GM10248 (cell line): ENCODE measurements at regions of chr16 and their contacts with region 1.

Region 1: DNA sequence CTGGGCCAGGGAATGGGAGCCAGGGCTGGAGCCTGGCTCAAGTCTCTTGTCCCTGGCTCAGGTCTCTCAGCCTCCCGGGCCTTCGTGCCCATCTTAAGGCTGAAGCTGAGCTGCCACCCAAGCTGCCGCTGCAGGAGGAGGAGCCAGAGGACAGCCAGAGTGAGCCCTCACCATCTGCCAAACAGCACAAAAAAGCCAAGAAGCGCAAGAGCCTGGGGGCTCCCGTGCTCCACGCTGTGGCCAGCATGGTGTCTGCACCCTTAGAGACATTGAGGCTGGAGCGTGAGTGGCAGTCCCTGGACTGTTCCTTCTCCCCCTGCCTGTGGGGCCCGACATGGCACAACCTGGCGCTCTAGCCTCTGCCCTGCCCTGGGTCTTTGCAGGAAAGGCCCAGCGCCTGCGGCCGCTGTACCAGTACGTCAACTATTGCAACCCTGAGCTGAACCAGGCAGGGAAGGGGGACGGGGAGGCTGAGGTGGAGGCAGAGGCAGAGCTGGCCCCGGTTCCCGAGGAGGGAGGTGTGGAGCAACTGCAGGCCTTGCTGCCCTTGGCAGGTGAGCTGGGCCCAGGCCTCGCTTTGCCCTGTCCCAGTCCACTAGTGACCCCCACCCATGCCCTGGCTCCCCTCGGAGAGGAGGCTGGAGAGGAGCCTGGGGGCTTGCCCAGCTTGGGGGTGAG is 1.3 kb downstream of the C16orf86 start:
- DNase-seq: peak; percentile 92
- CTCF ChIP-seq: peak; percentile 86

Region 2: DNA sequence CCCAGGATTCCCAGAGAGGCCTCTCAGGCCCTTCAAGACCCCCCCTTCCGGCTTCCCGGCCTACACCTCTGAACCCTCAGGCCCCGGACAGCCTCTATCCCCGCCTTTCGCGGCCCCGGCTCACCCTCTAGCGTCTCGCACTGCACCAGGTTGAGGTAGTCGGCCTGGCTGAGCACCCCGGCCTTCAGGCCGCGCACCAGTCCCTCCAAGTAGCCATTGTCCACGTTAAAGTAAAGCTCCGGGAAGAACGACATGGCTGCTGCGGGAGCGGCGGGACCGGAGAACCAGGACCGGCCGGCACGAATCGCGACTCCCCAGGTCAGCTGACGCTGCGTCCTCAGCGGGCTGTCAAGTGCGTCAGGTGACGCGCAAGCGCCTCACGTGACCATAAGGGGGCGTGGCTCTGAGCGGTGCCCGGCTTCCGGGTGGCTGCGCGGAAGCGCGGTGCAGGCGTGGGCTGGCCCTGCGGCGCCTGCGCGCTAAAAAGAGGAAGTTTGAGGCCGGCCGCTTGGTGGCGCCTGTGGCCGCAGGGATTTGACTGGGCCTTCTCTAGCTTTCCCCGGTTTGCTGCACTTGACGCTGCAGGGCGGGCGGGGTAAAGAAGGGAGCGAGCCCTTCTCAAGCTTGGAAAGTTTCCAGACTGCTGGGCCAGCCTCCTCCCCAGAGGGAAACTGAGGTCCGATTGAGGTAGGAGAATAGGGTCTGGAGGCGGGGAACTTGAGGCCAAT is 187.0 kb before region 1 on chr16 and contains the start of gene ATP6V0D1:
- CTCF ChIA-PET with region 1: interaction called, 12 read pairs
- POLR2A ChIA-PET with region 1: no interaction called
- DNase-seq: peak; percentile 99
- CTCF ChIP-seq: peak; percentile 90

Region 3: DNA sequence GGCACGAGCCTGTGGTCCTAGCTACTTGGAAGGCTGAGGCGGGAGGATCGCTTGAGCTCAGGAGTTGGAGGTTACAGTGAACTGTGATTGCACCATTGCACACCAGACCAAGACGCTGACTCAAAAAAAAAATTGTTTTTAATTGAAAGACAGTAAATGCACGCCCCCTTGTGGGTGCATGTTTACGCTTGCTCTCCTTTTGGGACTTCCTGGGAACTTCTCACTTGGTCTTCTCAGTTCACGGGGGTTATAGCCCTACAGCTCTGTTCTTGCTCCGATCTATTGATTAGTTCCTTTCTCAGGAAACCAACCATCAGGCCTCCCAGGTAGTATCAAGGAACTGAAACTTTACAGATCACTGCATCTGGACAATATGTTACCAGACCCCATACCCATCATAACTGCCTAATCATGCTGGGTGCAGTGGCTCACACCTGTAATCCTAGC is 153.6 kb before region 1 on chr16:
- CTCF ChIA-PET with region 1: interaction called, 357 read pairs
- POLR2A ChIA-PET with region 1: no interaction called
- DNase-seq: peak; percentile 79
- CTCF ChIP-seq: peak; percentile 61

Region 4: DNA sequence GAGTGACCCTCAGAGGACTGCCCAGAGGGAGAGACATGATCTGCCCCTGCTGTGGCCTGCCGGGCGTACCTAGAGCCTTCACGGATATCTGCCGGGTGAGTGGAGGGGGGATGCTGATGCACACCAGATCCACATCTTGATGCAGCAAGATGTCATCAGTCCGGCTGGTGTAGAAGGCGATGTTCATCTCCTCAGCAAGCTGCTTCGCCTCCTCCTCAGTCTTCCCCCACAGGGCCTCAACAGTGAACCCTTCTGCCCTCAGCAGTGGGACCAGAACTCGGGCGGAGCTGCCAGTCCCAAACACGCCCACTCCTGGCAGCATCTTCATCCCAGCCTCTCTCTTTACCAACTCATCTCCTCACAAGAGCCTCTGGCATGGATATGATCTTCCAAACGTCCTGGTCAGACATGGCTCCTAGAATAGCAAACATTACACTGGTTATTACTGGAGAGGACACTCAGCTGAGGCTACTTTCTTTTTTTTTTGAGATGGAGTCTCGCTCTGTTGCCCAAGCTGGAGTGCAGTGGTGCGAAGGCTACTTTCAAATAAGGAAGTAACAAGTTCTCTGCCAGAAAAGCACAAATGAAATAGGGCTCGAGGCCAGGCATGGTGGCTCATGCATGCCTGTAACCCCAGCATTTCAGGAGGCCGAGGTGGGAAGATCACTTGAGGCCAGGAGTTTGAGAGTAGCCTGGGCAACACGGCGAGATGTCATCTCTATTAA is 17.6 kb after region 1 on chr16:
- CTCF ChIA-PET with region 1: interaction called, 72 read pairs
- POLR2A ChIA-PET with region 1: interaction called, 3 read pairs
- DNase-seq: peak; percentile 37
- CTCF ChIP-seq: no peak

Region 5: GRCh38 chr16:67828651-67829050 is 160.7 kb after region 1 on chr16:
- CTCF ChIA-PET with region 1: no interaction called
- POLR2A ChIA-PET with region 1: no interaction called
- DNase-seq: no peak
- CTCF ChIP-seq: no peak

Region 6: DNA sequence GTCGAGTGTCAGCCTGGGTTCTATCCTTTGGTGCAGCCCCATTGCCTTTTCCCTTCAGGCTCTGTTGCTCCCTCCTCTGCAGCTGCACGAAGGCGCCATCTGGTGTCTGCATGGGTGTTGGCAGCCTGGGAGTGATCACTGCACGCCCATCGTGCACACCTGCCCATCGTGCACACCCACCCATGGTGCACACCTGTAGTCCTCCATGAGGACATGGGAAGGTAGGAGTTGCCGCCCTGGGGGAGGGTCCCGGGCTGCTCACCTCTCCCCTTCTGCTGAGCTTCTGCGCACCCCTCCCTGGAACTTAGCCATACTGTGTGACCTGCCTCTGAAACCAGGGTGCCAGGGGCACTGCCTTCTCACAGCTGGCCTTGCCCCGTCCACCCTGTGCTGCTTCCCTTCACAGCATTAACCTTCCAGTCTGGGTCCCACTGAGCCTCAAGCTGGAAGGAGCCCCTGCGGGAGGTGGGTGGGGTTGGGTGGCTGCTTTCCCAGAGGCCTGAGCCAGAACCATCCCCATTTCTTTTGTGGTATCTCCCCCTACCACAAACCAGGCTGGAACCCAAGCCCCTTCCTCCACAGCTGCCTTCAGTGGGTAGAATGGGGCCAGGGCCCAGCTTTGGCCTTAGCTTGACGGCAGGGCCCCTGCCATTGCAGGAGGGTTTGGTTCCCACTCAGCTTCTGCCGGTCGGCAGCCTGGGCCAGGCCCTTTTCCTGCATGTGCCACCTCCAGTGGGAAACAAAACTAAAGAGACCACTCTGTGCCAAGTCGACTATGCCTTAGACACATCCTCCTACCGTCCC is 260.8 kb after region 1 on chr16:
- CTCF ChIA-PET with region 1: interaction called, 38 read pairs
- POLR2A ChIA-PET with region 1: interaction called, 10 read pairs
- DNase-seq: peak; percentile 89
- CTCF ChIP-seq: peak; percentile 97